ENCODE measurements at regions of chr2 and their contacts with region 1.

Region 1: GRCh38 chr2:170005484-170006101 is 172.4 kb upstream of the MYO3B start:
- DNase-seq: no peak
- H3K4me3 Mint-ChIP-seq: no peak overlapping the region
- H3K27ac Mint-ChIP-seq: no peak overlapping the region
- H3K4me1 Mint-ChIP-seq: peaks cover 2% of the 10 kb centered on the region
- H3K27me3 Mint-ChIP-seq: no peaks in the 10 kb centered on the region

Region 2: GRCh38 chr2:169964740-169965139 is 40.9 kb before region 1 on chr2:
- intact Hi-C with region 1: loop called (anchors 2 kb)
- DNase-seq: no peak
- H3K4me3 Mint-ChIP-seq: no peak overlapping the region
- H3K27ac Mint-ChIP-seq: no peak overlapping the region
- H3K4me1 Mint-ChIP-seq: no peaks in the 10 kb centered on the region
- H3K27me3 Mint-ChIP-seq: no peaks in the 10 kb centered on the region

Region 3: GRCh38 chr2:170024721-170025120 is 19.1 kb after region 1 on chr2:
- intact Hi-C with region 1: no loop called
- DNase-seq: no peak
- H3K4me3 Mint-ChIP-seq: no peak overlapping the region
- H3K27ac Mint-ChIP-seq: no peak overlapping the region
- H3K4me1 Mint-ChIP-seq: no peaks in the 10 kb centered on the region
- H3K27me3 Mint-ChIP-seq: no peaks in the 10 kb centered on the region

Measured in activated CD4-positive, alpha-beta T cell treated with anti-CD3 and anti-CD28 coated beads, Interleukin-2, amount 10 ng/mL, durations not matched to agents 24 days and 14 days (primary cell).